Transverse colon (tissue), 4 donors: ENCODE measurements at regions of chr12 and their contacts with region 1.

Region 1: GRCh38 chr12:27870939-27871338 is 90.9 kb upstream of the MANSC4 start:
- DNase-seq: no peak
- H3K4me3 ChIP-seq: no peak overlapping the region
- H3K27ac ChIP-seq: no peak overlapping the region
- H3K4me1 ChIP-seq: no peaks in the 10 kb centered on the region
- H3K27me3 ChIP-seq: no peaks in the 10 kb centered on the region
- CTCF ChIP-seq: no peak
- EP300 ChIP-seq: no peak
- POLR2A ChIP-seq: no peak

Region 2: DNA sequence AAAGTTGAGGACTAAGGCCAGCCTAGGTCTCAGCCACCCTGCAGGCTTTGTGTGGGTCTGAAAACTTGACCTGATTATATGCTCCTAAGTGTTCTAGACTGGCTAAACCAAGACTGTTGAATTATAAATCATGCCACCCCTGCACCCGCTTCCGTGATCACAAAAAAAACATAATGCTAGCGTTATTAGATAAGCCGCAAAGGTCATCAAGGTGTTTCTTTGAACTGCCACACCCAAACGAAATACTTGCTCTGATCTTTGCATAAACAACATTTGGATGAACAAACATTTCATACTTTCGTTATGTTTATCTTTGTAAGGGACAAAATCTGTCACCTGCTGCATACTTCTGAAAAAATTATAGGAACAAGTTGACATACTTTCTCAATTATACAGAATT is 421.9 kb before region 1 on chr12:
- in situ Hi-C with region 1: no loop called
- intact Hi-C with region 1: loop called (anchors 10 kb)
- DNase-seq: no peak
- H3K4me3 ChIP-seq: no peak overlapping the region
- H3K27ac ChIP-seq: no peak overlapping the region
- H3K4me1 ChIP-seq: no peaks in the 10 kb centered on the region
- H3K27me3 ChIP-seq: no peaks in the 10 kb centered on the region
- CTCF ChIP-seq: no peak
- EP300 ChIP-seq: no peak
- POLR2A ChIP-seq: no peak

Region 3: GRCh38 chr12:28035500-28035899 is 164.6 kb after region 1 on chr12:
- in situ Hi-C with region 1: no loop called
- intact Hi-C with region 1: no loop called
- DNase-seq: no peak
- H3K4me3 ChIP-seq: no peak overlapping the region
- H3K27ac ChIP-seq: no peak overlapping the region
- H3K4me1 ChIP-seq: no peaks in the 10 kb centered on the region
- H3K27me3 ChIP-seq: no peaks in the 10 kb centered on the region
- CTCF ChIP-seq: no peak
- EP300 ChIP-seq: no peak
- POLR2A ChIP-seq: no peak